ENCODE measurements at regions of chr20 and their contacts with region 1.

Region 1: GRCh38 chr20:57693002-57693640 is 16.7 kb downstream of the PMEPA1 start:
- DNase-seq: peak; percentile 81
- H3K4me3 Mint-ChIP-seq: peak overlapping the region; percentile 11
- H3K27ac Mint-ChIP-seq: peak overlapping the region; percentile 7
- H3K4me1 Mint-ChIP-seq: peaks cover 46% of the 10 kb centered on the region
- H3K27me3 Mint-ChIP-seq: no peaks in the 10 kb centered on the region
- CTCF ChIP-seq: peak; percentile 39

Region 2: GRCh38 chr20:57718490-57719271 is 25.6 kb after region 1 on chr20:
- CTCF ChIA-PET with region 1: interaction called, 7 read pairs
- POLR2A ChIA-PET with region 1: interaction called, 19 read pairs
- intact Hi-C with region 1: loop called (anchors 2 kb)
- DNase-seq: peak; percentile 98
- H3K4me3 Mint-ChIP-seq: peak overlapping the region; percentile 68
- H3K27ac Mint-ChIP-seq: no peak overlapping the region
- H3K4me1 Mint-ChIP-seq: peaks cover 29% of the 10 kb centered on the region
- H3K27me3 Mint-ChIP-seq: peaks cover 11% of the 10 kb centered on the region
- CTCF ChIP-seq: no peak

Region 3: GRCh38 chr20:57748601-57749130 is 55.5 kb after region 1 on chr20:
- CTCF ChIA-PET with region 1: interaction called, 3 read pairs
- POLR2A ChIA-PET with region 1: interaction called, 12 read pairs
- intact Hi-C with region 1: no loop called
- DNase-seq: peak; percentile 90
- H3K4me3 Mint-ChIP-seq: peak overlapping the region; percentile 67
- H3K27ac Mint-ChIP-seq: peak overlapping the region; percentile 42
- H3K4me1 Mint-ChIP-seq: peaks cover 12% of the 10 kb centered on the region
- H3K27me3 Mint-ChIP-seq: no peaks in the 10 kb centered on the region
- CTCF ChIP-seq: no peak

Region 4: GRCh38 chr20:57991211-57991881 is 298.2 kb after region 1 on chr20:
- CTCF ChIA-PET with region 1: interaction called, 3 read pairs
- POLR2A ChIA-PET with region 1: interaction called, 10 read pairs
- intact Hi-C with region 1: loop called (anchors 5 kb)
- DNase-seq: peak; percentile 92
- H3K4me3 Mint-ChIP-seq: peak overlapping the region; percentile 34
- H3K27ac Mint-ChIP-seq: peak overlapping the region; percentile 85
- H3K4me1 Mint-ChIP-seq: peaks cover 22% of the 10 kb centered on the region
- H3K27me3 Mint-ChIP-seq: no peaks in the 10 kb centered on the region
- CTCF ChIP-seq: no peak

Region 5: GRCh38 chr20:58112017-58112781 is 419.1 kb after region 1 on chr20:
- CTCF ChIA-PET with region 1: interaction called, 3 read pairs
- POLR2A ChIA-PET with region 1: interaction called, 18 read pairs
- intact Hi-C with region 1: no loop called
- DNase-seq: peak; percentile 92
- H3K4me3 Mint-ChIP-seq: peak overlapping the region; percentile 15
- H3K27ac Mint-ChIP-seq: peak overlapping the region; percentile 87
- H3K4me1 Mint-ChIP-seq: peaks cover 36% of the 10 kb centered on the region
- H3K27me3 Mint-ChIP-seq: no peaks in the 10 kb centered on the region
- CTCF ChIP-seq: no peak

Region 6: DNA sequence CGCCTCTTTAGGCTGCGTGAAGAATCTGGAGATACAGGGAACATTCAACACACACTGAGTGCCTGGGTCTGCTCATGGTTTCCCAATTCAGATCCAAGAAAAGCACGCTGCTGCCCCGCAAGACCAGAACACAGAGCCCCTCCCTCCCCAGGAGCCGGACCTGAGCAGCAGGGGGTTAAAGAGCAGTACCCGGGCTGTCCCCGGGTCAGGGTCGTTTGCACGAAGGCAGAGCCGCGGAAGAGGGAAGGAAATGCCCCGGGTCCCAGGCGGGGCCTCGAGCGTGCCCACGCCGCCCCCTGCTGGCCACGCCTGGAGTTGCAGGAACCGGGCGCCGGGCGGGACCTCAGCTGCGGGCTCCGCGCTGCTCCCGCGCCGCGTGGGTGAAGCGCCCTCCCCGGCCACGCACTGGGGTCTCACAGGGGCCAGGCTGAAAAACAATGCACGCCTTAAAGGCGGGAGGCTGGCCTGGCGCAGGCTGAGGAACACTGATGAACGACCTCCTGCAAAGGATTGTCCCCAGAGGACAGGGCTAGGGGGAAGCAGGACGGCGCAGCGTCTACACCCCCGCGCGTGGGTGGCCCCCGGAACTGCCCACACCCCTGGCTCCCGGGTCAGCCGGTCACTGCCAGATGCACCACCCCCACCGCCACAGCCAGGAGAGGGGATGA is 486.4 kb after region 1 on chr20:
- CTCF ChIA-PET with region 1: interaction called, 13 read pairs
- POLR2A ChIA-PET with region 1: interaction called, 3 read pairs
- intact Hi-C with region 1: loop called (anchors 2 kb)
- DNase-seq: peak; percentile 40
- H3K4me3 Mint-ChIP-seq: no peak overlapping the region
- H3K27ac Mint-ChIP-seq: no peak overlapping the region
- H3K4me1 Mint-ChIP-seq: no peaks in the 10 kb centered on the region
- H3K27me3 Mint-ChIP-seq: peaks cover 32% of the 10 kb centered on the region
- CTCF ChIP-seq: peak; percentile 99